HepG2 (cell line): ENCODE measurements at regions of chr4 and their contacts with region 1.

Region 1: GRCh38 chr4:14871676-14872430 is 130.4 kb upstream of the CPEB2 start:
- DNase-seq: peak; percentile 3
- ATAC-seq: peak; percentile 91
- H3K4me3 ChIP-seq: no peak overlapping the region
- H3K27ac ChIP-seq: no peak overlapping the region
- H3K4me1 ChIP-seq: peaks cover 11% of the 10 kb centered on the region
- H3K27me3 ChIP-seq: no peaks in the 10 kb centered on the region
- CTCF ChIP-seq: peak; percentile 34; the same call in 1 of the 2 replicates
- EP300 ChIP-seq: no peak
- POLR2A ChIP-seq: no peak
- RAD21 ChIP-seq: no peak

Region 2: DNA sequence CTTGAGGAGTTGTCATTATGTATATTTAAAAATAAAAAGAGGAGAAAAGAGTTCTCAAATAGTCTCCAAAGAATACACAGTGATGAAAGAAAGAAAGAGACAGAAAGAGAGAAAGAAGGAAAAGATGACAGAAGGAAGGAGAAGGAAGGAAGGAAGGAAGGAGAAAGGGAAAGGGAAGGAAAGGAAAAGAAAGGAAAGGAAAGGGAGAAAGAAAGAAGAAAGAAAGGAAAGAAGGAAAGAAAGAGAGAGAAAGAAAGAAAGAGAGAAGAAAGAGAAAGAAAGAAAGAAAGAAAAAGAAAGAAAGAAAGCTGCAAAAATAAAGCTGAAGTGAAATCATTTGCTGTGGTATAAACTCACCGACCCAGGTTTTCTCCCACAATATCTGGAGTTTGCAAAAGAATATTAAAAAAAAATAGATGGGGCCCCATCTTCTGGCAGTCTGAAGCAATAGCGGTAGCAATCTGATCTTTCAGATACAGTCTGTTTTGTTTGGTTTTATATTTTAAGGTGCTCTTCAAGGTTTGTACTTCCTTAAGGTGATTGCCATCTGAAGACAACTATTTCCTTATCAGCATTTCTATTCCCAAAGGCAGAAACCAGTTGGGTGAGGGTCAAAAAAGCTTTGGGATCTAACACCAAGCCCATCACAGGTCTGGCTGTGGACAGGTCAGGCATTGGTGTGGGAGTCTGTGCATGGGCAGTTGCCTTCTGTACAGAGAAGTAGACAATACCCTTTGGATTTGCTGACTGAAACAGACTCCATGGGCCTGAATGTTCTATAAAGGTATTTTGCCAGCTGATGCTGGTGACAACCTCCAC is 290.8 kb after region 1 on chr4:
- CTCF ChIA-PET with region 1: no interaction called
- POLR2A ChIA-PET with region 1: no interaction called
- in situ Hi-C with region 1: no loop called
- intact Hi-C with region 1: loop called (anchors 1 kb)
- DNase-seq: peak; percentile 15
- ATAC-seq: peak; percentile 54; the same call in 2 of the 3 replicates
- H3K4me3 ChIP-seq: no peak overlapping the region
- H3K27ac ChIP-seq: no peak overlapping the region
- H3K4me1 ChIP-seq: peaks cover 17% of the 10 kb centered on the region
- H3K27me3 ChIP-seq: no peaks in the 10 kb centered on the region
- CTCF ChIP-seq: peak; percentile 17; the same call in 1 of the 2 replicates
- EP300 ChIP-seq: no peak
- POLR2A ChIP-seq: no peak
- RAD21 ChIP-seq: no peak